ENCODE measurements at regions of chr11 and their contacts with region 1.

Region 1: DNA sequence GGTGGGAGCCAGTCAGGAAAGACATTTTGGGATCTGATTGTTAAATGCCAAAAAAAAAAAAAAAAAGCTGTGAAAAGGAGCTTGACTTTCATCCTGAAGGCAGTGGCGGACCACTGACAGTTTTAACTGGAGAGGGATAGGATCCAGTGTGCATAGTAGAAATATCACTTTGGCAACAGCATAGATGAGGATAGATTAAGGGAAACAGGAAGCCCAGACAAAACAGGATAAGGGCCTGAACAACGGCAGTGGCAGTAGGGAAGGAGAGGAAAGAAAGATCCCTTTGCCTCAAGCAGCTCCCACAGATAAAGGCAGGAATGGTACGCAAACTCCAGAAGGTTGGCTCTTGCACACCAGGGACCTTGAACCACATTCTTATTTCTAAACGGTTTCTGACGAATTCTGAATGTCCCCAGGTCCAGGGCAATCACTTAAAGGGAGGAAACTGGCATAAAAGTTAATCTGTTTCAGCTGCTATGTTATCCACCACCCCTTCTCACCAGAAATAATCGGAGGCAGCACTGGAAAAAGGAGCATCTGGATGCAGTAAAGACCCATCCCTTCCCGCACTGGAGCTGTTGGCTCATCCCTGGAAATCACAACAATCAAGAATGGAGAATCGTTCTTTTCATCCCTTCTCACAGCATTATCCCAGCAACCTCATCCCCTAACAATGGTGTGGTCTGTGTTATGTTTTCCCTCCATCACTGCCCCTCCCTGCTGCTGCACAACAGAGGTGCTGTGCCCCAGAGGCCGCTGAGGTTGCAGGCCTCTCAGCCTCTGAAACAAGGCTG is 99.1 kb downstream of the GAB2 start:
- H3K4me3 Mint-ChIP-seq: no peak overlapping the region
- H3K27ac Mint-ChIP-seq: peak overlapping the region; percentile 21
- H3K4me1 Mint-ChIP-seq: peaks cover 83% of the 10 kb centered on the region
- H3K27me3 Mint-ChIP-seq: no peaks in the 10 kb centered on the region

Region 2: DNA sequence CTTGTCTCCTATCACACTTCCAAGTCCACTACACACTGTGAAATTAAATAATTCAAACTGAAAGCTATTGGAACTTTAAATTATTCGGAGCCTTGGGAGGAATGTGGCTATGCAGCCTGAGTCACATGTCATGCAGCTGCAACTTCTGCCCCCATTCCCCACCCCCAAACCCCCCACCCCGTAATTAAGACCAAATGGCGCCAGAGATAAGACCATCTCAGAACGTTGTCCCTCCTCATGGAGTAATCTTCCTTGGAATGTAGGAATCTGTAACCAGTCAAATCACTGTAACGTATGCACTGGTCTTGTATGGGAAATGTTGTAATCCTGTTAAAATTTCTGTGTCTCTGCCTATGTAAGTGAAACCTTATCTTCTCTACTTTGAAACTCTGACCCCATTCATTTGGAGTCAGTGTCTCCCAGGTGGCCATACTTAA is 62.1 kb after region 1 on chr11:
- intact Hi-C with region 1: loop called (anchors 5 kb)
- H3K4me3 Mint-ChIP-seq: peak overlapping the region; percentile 67
- H3K27ac Mint-ChIP-seq: peak overlapping the region; percentile 79
- H3K4me1 Mint-ChIP-seq: peaks cover 72% of the 10 kb centered on the region
- H3K27me3 Mint-ChIP-seq: no peaks in the 10 kb centered on the region

Region 3: GRCh38 chr11:78784321-78785061 is 466.0 kb after region 1 on chr11:
- intact Hi-C with region 1: no loop called
- H3K4me3 Mint-ChIP-seq: no peak overlapping the region
- H3K27ac Mint-ChIP-seq: no peak overlapping the region
- H3K4me1 Mint-ChIP-seq: no peaks in the 10 kb centered on the region
- H3K27me3 Mint-ChIP-seq: peaks cover 33% of the 10 kb centered on the region

Measured in dendritic cell treated with granulocyte-macrophage colony-stimulating factor and Interleukin-4, amounts not matched to agents 40 ng/mL and 50 ng/mL, for 4 days (primary cell).